A549 (cell line): ENCODE measurements at regions of chr7 and their contacts with region 1.

Region 1: DNA sequence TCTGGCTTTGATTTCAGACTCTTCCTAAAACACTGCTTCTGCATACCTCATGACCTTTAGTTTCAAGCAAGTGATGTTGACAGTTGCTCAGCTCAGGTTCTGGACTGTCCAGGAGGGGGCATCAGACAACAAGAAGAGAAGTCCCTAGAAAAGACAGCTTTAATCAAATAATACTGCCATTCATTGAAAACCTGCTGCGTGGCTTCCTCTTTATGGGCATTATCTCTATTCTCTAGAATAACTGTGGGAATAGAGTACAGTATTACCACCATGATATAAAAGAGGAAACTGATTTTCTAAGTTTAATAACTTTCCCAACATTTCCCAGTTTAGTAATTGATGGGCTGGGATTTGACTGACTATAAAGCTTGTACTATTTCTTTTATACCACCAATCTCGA is 170.4 kb downstream of the SNX13 start:
- DNase-seq: peak; percentile 15 to 77
- ATAC-seq: peak; percentile 87 to 93
- H3K4me3 ChIP-seq: no peak overlapping the region
- H3K27ac ChIP-seq: no peak overlapping the region
- H3K4me1 ChIP-seq: peaks cover 18% of the 10 kb centered on the region; the same call in 2 of the 3 replicates
- CTCF ChIP-seq: peak; percentile 81
- EP300 ChIP-seq: no peak
- POLR2A ChIP-seq: no peak
- RAD21 ChIP-seq: peak; percentile 87 to 92

Region 2: GRCh38 chr7:17593819-17594419 is 176.0 kb before region 1 on chr7:
- CTCF ChIA-PET with region 1: no interaction called
- POLR2A ChIA-PET with region 1: no interaction called
- DNase-seq: no peak
- ATAC-seq: no peak
- H3K4me3 ChIP-seq: no peak overlapping the region
- H3K27ac ChIP-seq: no peak overlapping the region
- H3K4me1 ChIP-seq: peaks cover 7% of the 10 kb centered on the region; the same call in 2 of the 3 replicates
- CTCF ChIP-seq: no peak
- EP300 ChIP-seq: no peak
- POLR2A ChIP-seq: no peak
- RAD21 ChIP-seq: no peak

Region 3: GRCh38 chr7:17696443-17696842 is 73.5 kb before region 1 on chr7:
- CTCF ChIA-PET with region 1: interaction called, 11 read pairs
- POLR2A ChIA-PET with region 1: interaction called, 3 read pairs
- DNase-seq: peak; percentile 70 to 93
- ATAC-seq: peak; percentile 100
- H3K4me3 ChIP-seq: no peak overlapping the region
- H3K27ac ChIP-seq: peak overlapping the region; percentile 92 to 93
- H3K4me1 ChIP-seq: peaks cover 24% of the 10 kb centered on the region
- CTCF ChIP-seq: no peak
- EP300 ChIP-seq: peak; percentile 96 to 97
- POLR2A ChIP-seq: no peak
- RAD21 ChIP-seq: peak in 1 of 2 experiments; percentile 62; a peak in 3 of 5 replicates

Region 4: DNA sequence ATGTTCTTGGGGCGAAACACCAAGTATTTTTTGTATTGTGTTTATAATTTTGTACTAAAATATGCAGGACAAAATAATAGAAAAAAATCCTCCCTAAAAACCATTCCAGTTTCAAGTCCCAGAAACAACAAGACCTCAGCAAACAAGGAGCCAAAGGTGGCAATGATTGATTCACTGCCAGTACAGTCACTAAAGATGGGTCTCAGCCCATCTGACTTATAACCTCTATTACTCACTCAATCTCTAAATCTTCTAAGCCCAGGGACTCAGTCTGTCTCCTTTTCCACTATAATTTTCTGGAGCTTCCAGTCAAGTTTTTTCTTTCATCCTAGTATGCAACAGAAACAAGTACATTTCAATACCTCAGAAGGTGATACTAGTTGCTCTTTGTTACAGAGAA is 137.1 kb after region 1 on chr7:
- CTCF ChIA-PET with region 1: no interaction called
- POLR2A ChIA-PET with region 1: no interaction called
- DNase-seq: no peak
- ATAC-seq: no peak
- H3K4me3 ChIP-seq: no peak overlapping the region
- H3K27ac ChIP-seq: no peak overlapping the region
- H3K4me1 ChIP-seq: 0 out of 3 replicates have a peak, but pooled peaks cover 4% of the 10 kb centered on the region
- CTCF ChIP-seq: no peak
- EP300 ChIP-seq: no peak
- POLR2A ChIP-seq: no peak
- RAD21 ChIP-seq: no peak

Region 5: DNA sequence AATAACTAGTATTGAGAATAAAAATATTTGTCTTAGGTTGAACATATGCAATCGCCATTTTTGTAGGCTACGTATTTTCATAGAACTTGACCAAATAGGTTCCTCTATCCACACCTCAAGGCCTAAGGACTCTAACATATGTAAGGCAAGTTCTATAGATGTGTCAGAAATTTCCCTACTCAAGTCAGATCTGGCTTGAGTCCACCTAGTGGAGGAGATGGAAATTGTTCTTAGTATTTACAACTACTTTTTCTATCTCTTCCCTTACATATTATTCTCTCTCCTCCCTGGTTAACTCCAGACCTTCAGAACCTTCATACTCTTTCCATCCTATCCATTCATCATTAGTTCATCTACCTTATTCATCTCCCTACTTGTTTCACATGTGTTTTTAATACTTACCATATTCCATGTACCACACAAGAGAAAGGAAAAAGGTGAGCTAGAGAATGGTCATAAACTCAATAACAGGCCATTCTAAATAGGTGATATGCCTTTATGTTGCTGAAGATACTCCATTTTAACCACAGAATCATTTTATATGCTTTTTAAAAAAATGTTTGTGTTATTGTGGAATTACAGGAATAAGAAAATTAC is 551.2 kb after region 1 on chr7:
- CTCF ChIA-PET with region 1: interaction called, 15 read pairs
- POLR2A ChIA-PET with region 1: no interaction called
- DNase-seq: peak; percentile 17 to 55
- ATAC-seq: peak; percentile 54 to 72; a peak in 4 of 6 replicates
- H3K4me3 ChIP-seq: no peak overlapping the region
- H3K27ac ChIP-seq: no peak overlapping the region
- H3K4me1 ChIP-seq: no peaks in the 10 kb centered on the region
- CTCF ChIP-seq: peak; percentile 48
- EP300 ChIP-seq: no peak
- POLR2A ChIP-seq: no peak
- RAD21 ChIP-seq: peak; percentile 28 to 57; a peak in 3 of 5 replicates

Region 6: DNA sequence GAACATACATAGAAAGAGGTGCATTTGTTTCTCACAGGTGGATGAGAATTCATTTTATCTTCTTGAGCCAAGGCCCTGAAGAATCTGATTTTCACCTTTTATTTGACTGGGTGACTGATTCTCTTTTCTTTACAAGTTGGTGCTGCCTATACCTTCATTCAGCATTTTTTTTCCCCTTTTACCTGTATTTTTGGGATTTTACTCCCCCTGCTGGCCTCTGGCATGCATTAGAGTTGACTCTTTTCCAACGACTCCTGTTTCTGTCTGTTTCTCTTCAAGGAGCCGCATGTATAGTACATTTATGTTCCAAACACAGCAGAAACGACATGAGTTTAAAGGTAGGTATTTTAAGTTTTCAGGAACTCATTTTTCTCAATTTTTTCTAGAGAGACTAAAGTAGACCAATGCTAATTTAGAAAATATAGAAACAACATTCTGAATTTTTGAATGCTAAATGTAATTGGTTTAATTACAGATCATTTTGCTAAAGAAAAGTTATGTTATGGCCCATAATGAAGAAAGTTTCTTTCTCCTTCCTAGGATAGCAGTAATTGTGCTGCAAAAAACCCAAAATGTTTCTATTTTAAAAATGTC is 575.8 kb after region 1 on chr7:
- CTCF ChIA-PET with region 1: interaction called, 25 read pairs
- POLR2A ChIA-PET with region 1: no interaction called
- DNase-seq: peak; percentile 5 to 48
- ATAC-seq: peak; percentile 78 to 81
- H3K4me3 ChIP-seq: no peak overlapping the region
- H3K27ac ChIP-seq: no peak overlapping the region
- H3K4me1 ChIP-seq: no peaks in the 10 kb centered on the region
- CTCF ChIP-seq: peak; percentile 91
- EP300 ChIP-seq: no peak
- POLR2A ChIP-seq: no peak
- RAD21 ChIP-seq: peak; percentile 85 to 88